H1 (cell line): ENCODE measurements at regions of chr6 and their contacts with region 1.

Region 1: GRCh38 chr6:27183060-27183832 is 64.3 kb upstream of the PRSS16 start:
- DNase-seq: no peak
- H3K4me3 ChIP-seq: no peak overlapping the region
- H3K27ac ChIP-seq: no peak overlapping the region
- H3K4me1 ChIP-seq: peaks cover 0 to 3% (median 0%) of the 10 kb centered on the region in 4 experiments; a peak in 2 of 7 replicates
- H3K27me3 ChIP-seq: no peaks in the 10 kb centered on the region; a peak in 1 of 7 replicates
- CTCF ChIP-seq: peak in 2 of 3 experiments; percentile 35 to 46; a peak in 3 of 4 replicates
- EP300 ChIP-seq: no peak
- POLR2A ChIP-seq: no peak
- RAD21 ChIP-seq: peak in 1 of 2 experiments; percentile 23; a peak in 2 of 4 replicates

Region 2: DNA sequence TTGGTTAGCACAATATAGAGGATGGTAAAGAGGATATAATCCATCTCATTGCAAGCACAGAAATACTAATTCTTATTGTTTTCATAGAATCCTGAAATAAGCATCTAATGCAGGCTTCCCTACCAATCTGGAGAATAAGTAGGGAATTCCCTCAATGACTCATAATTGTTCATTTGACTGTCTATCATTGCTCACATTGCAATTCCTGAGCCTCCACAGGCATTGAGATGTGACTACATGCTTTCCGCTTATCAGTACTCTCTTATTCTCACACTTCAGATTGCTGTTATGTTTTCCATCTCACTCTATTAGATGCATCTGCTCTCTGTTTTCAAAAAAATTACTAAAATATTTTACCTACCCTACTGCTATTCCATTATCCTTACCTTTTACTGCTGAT is 151.9 kb before region 1 on chr6:
- CTCF ChIA-PET with region 1: no interaction called
- POLR2A ChIA-PET with region 1: no interaction called
- DNase-seq: no peak
- H3K4me3 ChIP-seq: no peak overlapping the region
- H3K27ac ChIP-seq: no peak overlapping the region
- H3K4me1 ChIP-seq: no peaks in the 10 kb centered on the region
- H3K27me3 ChIP-seq: no peaks in the 10 kb centered on the region
- CTCF ChIP-seq: no peak
- EP300 ChIP-seq: no peak
- POLR2A ChIP-seq: no peak
- RAD21 ChIP-seq: no peak

Region 3: DNA sequence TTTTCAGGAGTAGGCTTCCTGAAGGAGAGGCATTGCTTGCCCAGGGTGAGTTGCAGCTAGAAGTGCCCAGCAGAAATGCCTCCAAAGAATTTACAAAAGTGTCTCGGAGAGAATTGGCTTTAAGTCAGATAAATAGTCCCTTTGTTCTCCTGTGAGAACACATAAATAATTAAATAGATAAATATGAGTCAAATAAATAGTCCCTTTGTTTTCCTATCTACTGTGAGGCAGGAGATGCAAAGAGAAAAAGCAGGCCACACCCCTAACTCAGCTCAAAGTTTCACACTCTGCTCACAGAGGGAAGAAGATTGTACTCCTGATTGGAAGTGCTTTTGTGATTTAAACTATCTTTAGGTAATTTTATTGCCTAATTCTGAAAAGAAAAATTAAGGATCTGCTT is 116.4 kb before region 1 on chr6:
- CTCF ChIA-PET with region 1: no interaction called
- POLR2A ChIA-PET with region 1: no interaction called
- DNase-seq: no peak
- H3K4me3 ChIP-seq: peak overlapping the region in 2 of 4 experiments; percentile 2 to 7; a peak in 2 of 8 replicates
- H3K27ac ChIP-seq: no peak overlapping the region
- H3K4me1 ChIP-seq: peaks cover 4 to 5% (median 4%) of the 10 kb centered on the region in 4 experiments; a peak in 6 of 7 replicates
- H3K27me3 ChIP-seq: no peaks in the 10 kb centered on the region
- CTCF ChIP-seq: no peak
- EP300 ChIP-seq: no peak
- POLR2A ChIP-seq: no peak
- RAD21 ChIP-seq: no peak

Region 4: GRCh38 chr6:27111743-27112142 is 71.5 kb before region 1 on chr6:
- CTCF ChIA-PET with region 1: no interaction called
- POLR2A ChIA-PET with region 1: no interaction called
- DNase-seq: no peak
- H3K4me3 ChIP-seq: no peak overlapping the region
- H3K27ac ChIP-seq: no peak overlapping the region
- H3K4me1 ChIP-seq: no peaks in the 10 kb centered on the region
- H3K27me3 ChIP-seq: no peaks in the 10 kb centered on the region
- CTCF ChIP-seq: no peak
- EP300 ChIP-seq: no peak
- POLR2A ChIP-seq: no peak
- RAD21 ChIP-seq: no peak

Region 5: GRCh38 chr6:27157459-27158315 is 25.6 kb before region 1 on chr6:
- CTCF ChIA-PET with region 1: interaction called, 11 read pairs
- POLR2A ChIA-PET with region 1: interaction called, 3 read pairs
- DNase-seq: peak in 1 of 2 experiments; percentile 77
- H3K4me3 ChIP-seq: peak overlapping the region; percentile 74 to 85 (median 84)
- H3K27ac ChIP-seq: no peak overlapping the region
- H3K4me1 ChIP-seq: peaks cover 2 to 11% (median 7%) of the 10 kb centered on the region in 4 experiments; a peak in 5 of 7 replicates
- H3K27me3 ChIP-seq: no peaks in the 10 kb centered on the region
- CTCF ChIP-seq: peak; percentile 33 to 65 (median 52)
- EP300 ChIP-seq: no peak
- POLR2A ChIP-seq: no peak
- RAD21 ChIP-seq: peak in 1 of 2 experiments; percentile 25; a peak in 2 of 4 replicates